Left cardiac atrium (tissue), 4 donors: ENCODE measurements at regions of chr14 and their contacts with region 1.

Region 1: DNA sequence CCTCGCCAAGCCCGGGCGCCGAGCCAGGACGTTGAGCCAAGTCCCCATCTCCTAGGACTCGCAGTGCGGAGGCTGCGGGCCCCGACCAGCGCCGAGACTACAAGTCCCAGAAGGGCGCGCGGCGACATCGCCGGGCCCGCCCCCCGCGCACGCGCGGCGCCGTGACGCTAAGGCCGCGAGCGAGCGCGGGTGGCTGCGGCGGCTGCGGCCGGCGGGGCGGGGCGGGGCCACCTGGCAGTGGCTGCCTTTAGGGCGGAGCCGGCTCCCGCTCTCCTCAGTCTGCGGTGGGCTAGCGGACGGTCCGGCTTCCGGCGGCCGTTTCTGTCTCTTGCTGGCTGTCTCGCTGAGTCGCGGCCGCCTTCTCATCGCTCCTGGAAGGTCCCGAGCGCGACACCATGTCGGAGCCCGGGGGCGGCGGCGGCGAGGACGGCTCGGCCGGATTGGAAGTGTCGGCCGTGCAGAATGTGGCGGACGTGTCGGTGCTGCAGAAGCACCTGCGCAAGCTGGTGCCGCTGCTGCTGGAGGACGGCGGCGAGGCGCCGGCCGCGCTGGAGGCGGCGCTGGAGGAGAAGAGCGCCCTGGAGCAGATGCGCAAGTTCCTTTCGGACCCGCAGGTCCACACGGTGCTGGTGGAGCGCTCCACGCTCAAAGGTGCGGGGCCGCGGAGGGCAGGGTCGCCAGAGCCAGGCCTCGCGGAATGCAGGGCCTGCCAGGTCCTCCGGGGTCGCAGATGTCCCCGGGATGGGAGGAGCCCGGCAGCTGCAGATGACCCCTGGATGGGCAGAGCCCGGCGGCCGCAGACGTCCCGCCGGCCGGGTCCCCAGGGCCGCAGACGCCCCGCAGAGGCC is at the start of gene DYNC1H1:
- DNase-seq: peak; percentile 97
- ATAC-seq: peak; percentile 91 to 96
- total RNA-seq, gene DYNC1H1: 298 to 361 TPM

Region 2: DNA sequence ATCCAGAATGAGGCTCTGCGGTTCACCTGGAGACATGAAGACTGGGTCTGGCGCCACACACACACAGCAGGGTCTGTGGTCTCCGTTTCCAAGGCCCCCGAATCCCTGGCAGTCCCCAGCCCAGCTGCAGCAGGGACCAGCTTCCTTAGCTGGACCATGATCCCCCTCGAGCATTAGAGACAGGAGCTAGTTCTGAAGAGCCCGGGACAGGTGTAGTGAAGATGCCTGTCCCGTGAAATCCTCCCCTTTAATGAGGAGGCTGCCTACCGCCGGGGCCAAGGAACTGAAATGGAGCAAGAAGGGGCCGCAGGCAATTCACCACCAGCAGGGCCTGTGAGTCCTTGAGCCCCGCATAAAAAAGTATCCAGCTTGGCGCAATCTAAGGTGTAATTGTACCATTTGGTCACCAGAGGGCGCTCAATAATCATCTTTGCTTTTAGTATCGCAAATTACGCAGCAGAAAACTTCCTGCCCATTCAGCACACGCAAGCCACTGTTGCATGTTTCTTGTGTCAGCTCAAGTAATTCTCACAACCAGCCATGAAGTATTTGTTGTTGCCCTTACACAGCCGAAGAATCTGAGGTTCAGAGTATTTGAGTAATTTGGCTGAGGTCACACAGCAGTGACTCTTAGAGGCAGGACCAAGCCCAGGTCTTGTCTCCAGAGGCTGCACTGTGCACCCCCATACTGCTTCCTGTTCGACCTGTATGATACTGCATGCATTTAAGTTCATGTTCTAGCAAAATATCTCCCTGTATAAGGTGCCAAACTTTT is 257.3 kb before region 1 on chr14:
- intact Hi-C with region 1: loop called in 1 of 2 experiments (anchors 5 kb)
- DNase-seq: peak; percentile 41
- ATAC-seq: peak; percentile 49 to 65

Region 3: DNA sequence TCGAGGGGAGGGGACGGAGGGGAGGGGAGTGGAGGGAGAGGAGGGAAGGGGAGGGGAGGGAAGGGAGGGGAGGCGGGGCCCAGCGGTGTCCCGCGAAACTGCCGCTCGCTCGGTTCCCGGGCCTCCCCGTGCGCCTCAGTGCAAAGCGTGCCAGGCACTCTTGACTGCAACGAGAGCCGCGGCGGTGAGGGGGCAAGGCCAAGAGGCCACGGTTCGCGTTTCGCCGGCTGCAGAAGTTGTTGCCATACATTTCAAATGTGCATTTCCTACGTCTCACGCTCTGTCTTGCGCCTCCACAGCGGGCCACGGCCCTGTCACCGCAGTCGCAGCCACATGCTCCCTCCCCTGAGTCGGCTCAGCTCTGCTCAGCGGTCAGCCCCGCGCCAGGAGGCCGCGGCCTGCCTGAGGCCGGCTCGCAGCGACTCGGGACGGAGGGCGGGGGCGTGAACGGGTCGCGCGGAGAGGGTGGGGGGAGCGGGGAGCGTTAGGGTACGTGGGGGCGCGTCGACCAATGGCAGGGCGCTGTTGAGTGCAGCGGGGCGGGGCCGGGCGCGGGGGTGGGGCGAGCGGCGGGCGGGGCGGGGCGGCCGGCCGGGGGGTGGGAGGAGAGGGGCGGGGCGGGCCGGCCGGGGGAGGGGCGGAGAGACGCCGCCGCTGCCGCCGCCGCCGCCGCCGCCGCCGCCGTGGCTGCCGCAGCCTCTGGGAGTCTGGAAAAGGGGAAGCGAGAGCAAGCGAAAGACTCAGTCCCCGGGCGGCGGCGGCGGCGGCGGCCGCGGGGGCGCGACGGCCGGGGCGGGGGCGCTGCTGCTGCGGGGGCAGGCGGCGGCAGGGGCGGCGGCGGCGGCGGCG is 203.3 kb before region 1 on chr14 and contains the start of gene PPP2R5C:
- intact Hi-C with region 1: loop called (anchors 10 kb)
- DNase-seq: peak; percentile 95
- ATAC-seq: peak; percentile 92
- total RNA-seq, gene PPP2R5C: 126 to 142 TPM